ENCODE measurements at regions of chr7 and their contacts with region 1.

Region 1: DNA sequence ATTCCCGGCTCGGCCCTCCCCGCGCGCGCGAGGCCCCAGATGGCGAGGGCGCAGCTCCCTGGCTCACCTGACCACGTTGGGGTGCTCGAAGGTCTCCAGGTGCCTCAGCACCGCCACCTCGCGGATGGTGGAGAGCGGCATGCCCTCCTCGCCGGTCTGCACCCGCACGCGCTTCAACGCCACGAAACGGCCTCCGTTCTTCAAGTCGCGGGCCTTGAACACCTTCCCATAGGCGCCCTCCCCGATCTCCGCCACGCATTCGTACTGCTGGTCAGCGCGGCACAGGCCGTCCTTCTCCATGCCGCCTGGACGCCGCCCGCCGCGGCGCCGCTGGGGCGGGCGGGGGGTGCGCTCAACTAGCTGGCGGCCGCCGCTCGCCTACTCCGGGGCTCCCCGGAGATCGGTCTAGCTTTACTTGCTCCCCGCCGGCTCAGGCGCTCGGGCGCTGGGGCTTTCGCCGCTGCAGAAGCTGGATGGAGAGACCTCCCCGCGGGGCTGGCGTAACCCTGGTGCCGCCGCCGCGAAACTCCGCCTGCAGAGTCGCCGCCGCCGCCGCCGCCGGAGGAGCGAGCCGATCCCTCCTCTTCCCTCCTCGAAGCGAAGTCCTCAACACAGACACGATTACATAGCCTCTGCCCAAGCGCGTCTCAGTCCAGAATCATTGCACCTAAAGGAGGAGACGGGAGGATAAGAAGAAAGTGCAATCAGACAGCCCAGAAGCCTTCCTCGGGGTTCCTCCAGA is 3.2 kb downstream of the CDK6 start:
- DNase-seq: peak; percentile 85 to 93 (median 89)
- ATAC-seq: peak; percentile 59 to 85 (median 79)
- H3K4me3 ChIP-seq: peak overlapping the region; percentile 65 to 91 (median 85)
- H3K27ac ChIP-seq: peak overlapping the region; percentile 87 to 97 (median 92)
- H3K4me1 ChIP-seq: peaks cover 1 to 54% (median 20%) of the 10 kb centered on the region in 12 donors
- H3K27me3 ChIP-seq: no peaks in the 10 kb centered on the region
- CTCF ChIP-seq: peak; percentile 72 to 93 (median 83)
- POLR2A ChIP-seq: peak in 1 of 2 donors; percentile 25

Region 2: DNA sequence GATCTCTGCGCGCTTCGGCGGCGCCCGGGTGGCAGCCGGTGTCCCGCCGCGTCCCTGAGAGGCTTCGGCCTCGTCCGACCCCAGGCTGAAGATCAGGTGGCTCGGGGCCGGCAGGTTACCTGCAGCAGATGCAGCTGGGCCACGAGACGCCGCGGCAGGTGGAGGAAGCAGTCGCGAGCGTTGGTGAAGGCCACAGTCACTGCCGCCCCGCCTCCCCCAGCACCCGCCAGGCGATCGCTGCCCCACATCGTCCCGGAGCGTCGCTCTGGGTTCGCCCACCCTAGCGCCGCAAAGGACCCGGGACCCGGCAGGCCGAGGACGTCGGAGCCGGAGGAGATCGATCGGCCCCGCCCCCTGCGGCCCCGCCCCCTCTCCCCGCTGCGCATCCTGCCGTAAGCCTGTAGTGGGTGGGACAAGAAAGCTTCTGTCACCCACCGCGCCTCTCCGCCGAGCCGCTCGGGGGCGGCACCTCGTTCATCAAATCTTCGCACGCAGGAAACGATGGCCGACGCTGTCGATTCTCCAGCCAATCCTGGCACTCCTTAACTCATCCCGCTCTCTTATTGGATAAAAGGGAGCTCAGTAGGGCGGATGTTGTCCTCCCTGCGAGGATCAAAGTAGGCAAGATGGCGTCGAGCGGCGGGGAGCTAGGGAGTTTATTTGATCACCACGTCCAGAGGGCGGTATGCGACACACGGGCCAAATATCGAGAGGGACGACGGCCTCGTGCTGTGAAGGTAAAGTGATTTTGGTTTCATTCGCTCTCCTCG is 304.8 kb before region 1 on chr7 and contains the starts of genes PEX1 and RBM48:
- intact Hi-C with region 1: loop called in 1 of 10 experiments (anchors 2 kb)
- DNase-seq: peak; percentile 96 to 97 (median 96)
- ATAC-seq: peak; percentile 98 to 99 (median 99)
- H3K4me3 ChIP-seq: peak within 1 kb of the TSS; percentile 65 to 92 (median 84)
- H3K27ac ChIP-seq: peak within 1 kb of the TSS; percentile 45 to 92 (median 84)
- H3K4me1 ChIP-seq: peaks cover 0 to 41% (median 19%) of the 10 kb centered on the region in 12 donors
- H3K27me3 ChIP-seq: no peaks in the 10 kb centered on the region
- CTCF ChIP-seq: peak in 10 of 12 donors; percentile 28 to 76 (median 56)
- POLR2A ChIP-seq: peak in 1 of 2 donors; percentile 56
- total RNA-seq, gene PEX1: 10.7 to 19.9 (median 15.4) TPM
- total RNA-seq, gene RBM48: 6.5 to 13.7 (median 10.8) TPM

Region 3: GRCh38 chr7:92633211-92633906 is 199.8 kb before region 1 on chr7:
- intact Hi-C with region 1: loop called in 1 of 10 experiments (anchors 5 kb)
- DNase-seq: peak in 1 of 5 donors; percentile 25
- ATAC-seq: peak; percentile 79 to 92 (median 90)
- H3K4me3 ChIP-seq: peak overlapping the region in 1 of 12 donors; percentile 8
- H3K27ac ChIP-seq: peak overlapping the region; percentile 17 to 86 (median 60)
- H3K4me1 ChIP-seq: peaks cover 14 to 62% (median 43%) of the 10 kb centered on the region in 12 donors
- H3K27me3 ChIP-seq: no peaks in the 10 kb centered on the region
- CTCF ChIP-seq: no peak
- POLR2A ChIP-seq: no peak

Region 4: DNA sequence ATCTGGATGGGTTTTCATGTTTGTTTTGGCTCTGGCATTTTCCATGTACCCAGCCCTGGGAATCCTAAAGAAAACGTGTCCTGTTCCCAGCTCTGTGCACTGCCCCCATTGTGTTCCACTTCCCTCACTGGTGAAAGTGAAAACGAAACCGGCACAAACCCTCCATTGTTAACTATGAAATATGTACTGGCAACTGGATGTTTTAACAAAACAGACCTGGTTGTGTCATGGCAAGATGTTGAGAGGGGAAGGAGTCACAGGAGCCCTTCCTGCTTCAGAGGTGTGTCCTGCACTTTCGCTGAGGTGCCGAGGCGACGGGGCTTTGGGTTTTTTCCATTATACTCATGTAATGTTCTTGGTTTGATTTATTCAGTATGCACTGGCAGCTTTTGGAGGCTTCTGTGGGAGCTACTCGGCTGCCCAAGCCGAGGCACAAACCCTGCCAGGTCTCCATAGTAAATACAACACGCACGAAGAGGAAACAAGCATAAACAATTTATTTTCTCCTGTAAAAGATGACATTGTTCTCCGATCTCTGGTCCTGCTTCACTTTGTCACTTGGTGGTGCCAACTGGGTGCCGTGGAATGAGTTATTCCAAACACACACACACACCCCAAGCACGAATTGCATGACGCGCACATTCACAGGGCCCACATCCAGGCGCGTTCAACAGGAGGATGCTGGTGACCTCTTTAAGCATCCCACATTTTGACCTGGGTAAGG is 115.0 kb before region 1 on chr7:
- intact Hi-C with region 1: loop called in 3 of 10 experiments (anchors 5 kb)
- DNase-seq: peak; percentile 43 to 71 (median 64)
- ATAC-seq: peak; percentile 76 to 92 (median 83)
- H3K4me3 ChIP-seq: peak overlapping the region in 11 of 12 donors; percentile 24 to 59 (median 44)
- H3K27ac ChIP-seq: peak overlapping the region; percentile 66 to 93 (median 90)
- H3K4me1 ChIP-seq: peaks cover 0 to 49% (median 18%) of the 10 kb centered on the region in 12 donors
- H3K27me3 ChIP-seq: no peaks in the 10 kb centered on the region
- CTCF ChIP-seq: no peak
- POLR2A ChIP-seq: no peak

Region 5: GRCh38 chr7:92797693-92798092 is 35.5 kb before region 1 on chr7:
- intact Hi-C with region 1: loop called in 3 of 10 experiments (anchors 5 kb)
- DNase-seq: peak in 4 of 5 donors; percentile 27 to 66 (median 49)
- ATAC-seq: peak; percentile 87 to 95 (median 92)
- H3K4me3 ChIP-seq: no peak overlapping the region
- H3K27ac ChIP-seq: peak overlapping the region in 11 of 12 donors; percentile 14 to 68 (median 33)
- H3K4me1 ChIP-seq: peaks cover 0 to 74% (median 39%) of the 10 kb centered on the region in 12 donors
- H3K27me3 ChIP-seq: no peaks in the 10 kb centered on the region
- CTCF ChIP-seq: peak in 3 of 12 donors; percentile 16 to 31 (median 21)
- POLR2A ChIP-seq: no peak

Region 6: GRCh38 chr7:93476491-93477344 is 643.5 kb after region 1 on chr7:
- intact Hi-C with region 1: no loop called
- DNase-seq: no peak
- ATAC-seq: no peak
- H3K4me3 ChIP-seq: no peak overlapping the region
- H3K27ac ChIP-seq: no peak overlapping the region
- H3K4me1 ChIP-seq: no peaks in the 10 kb centered on the region
- H3K27me3 ChIP-seq: no peaks in the 10 kb centered on the region
- CTCF ChIP-seq: no peak
- POLR2A ChIP-seq: no peak

Measured in heart left ventricle (tissue), 16 donors.